ENCODE measurements at regions of chr1 and their contacts with region 1.

Region 1: DNA sequence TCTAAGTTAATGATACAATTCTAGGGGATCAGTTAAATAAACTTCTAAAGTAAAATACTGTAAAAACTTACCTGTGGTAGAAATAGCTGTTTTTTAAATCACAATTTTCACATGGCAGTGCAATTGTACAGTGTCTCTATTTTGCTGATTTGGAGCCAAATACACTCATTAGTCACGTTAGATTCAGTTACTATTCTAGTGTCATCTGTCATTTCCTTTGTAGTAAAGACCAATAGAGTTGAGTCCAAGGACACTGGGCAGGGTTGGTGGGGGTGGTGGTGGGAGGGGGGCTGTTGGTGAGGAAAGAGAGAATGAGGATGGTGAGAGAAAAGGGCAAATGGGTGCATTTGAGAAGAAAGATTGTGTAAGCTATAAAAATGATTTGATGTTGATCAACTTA is 33.6 kb downstream of the CD55 start:
- DNase-seq: no peak
- H3K4me3 ChIP-seq: no peak overlapping the region
- H3K27ac ChIP-seq: no peak overlapping the region
- H3K4me1 ChIP-seq: no peaks in the 10 kb centered on the region
- H3K27me3 ChIP-seq: peaks cover 2% of the 10 kb centered on the region
- CTCF ChIP-seq: no peak
- EP300 ChIP-seq: no peak
- POLR2A ChIP-seq: no peak

Region 2: DNA sequence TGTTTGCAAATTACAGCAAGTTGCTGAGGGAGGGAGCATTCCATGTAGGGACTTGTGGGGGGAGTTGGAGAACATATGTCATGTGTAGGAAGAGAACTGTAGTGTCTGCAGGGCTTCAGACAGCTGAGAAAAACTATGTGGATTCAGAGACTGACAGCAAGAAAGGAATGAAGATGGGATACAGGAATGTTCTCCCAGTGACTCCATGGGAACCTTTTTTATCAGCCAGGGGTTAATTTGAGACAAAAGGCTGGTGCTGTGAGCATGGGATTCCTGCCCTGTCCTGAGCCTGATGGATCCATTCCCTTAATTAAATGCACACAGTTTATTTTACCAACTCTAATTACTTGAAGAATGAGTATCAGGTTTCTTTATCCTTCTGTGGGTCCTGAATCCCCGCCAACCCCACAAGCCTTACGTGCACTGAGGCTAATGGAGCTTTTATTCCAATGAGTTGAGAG is 915.6 kb after region 1 on chr1:
- intact Hi-C with region 1: loop called in 1 of 4 experiments (anchors 5 kb)
- DNase-seq: no peak
- H3K4me3 ChIP-seq: no peak overlapping the region
- H3K27ac ChIP-seq: no peak overlapping the region
- H3K4me1 ChIP-seq: peaks cover 3% of the 10 kb centered on the region
- H3K27me3 ChIP-seq: no peaks in the 10 kb centered on the region
- CTCF ChIP-seq: no peak
- EP300 ChIP-seq: no peak
- POLR2A ChIP-seq: no peak